Activated naive CD8-positive, alpha-beta T cell treated with anti-CD3 and anti-CD28 coated beads, Interleukin-2, amount 10 ng/mL, durations not matched to agents 7 days and 5 days (primary cell): ENCODE measurements at regions of chr3 and their contacts with region 1.

Region 1: GRCh38 chr3:25664810-25665314 is at the start of gene TOP2B:
- DNase-seq: peak; percentile 92
- ATAC-seq: peak; percentile 89
- H3K4me3 Mint-ChIP-seq: peak within 1 kb of the TSS; percentile 94
- H3K27ac Mint-ChIP-seq: peak within 1 kb of the TSS; percentile 98
- H3K4me1 Mint-ChIP-seq: peaks cover 31% of the 10 kb centered on the region
- H3K27me3 Mint-ChIP-seq: no peaks in the 10 kb centered on the region
- total RNA-seq, gene TOP2B: 139 to 143 TPM

Region 2: GRCh38 chr3:25648107-25648535 is 16.7 kb before region 1 on chr3:
- POLR2A ChIA-PET with region 1: no interaction called
- DNase-seq: peak; percentile 46
- ATAC-seq: peak; percentile 91
- H3K4me3 Mint-ChIP-seq: no peak overlapping the region
- H3K27ac Mint-ChIP-seq: peak overlapping the region; percentile 1
- H3K4me1 Mint-ChIP-seq: peaks cover 23% of the 10 kb centered on the region
- H3K27me3 Mint-ChIP-seq: no peaks in the 10 kb centered on the region

Region 3: DNA sequence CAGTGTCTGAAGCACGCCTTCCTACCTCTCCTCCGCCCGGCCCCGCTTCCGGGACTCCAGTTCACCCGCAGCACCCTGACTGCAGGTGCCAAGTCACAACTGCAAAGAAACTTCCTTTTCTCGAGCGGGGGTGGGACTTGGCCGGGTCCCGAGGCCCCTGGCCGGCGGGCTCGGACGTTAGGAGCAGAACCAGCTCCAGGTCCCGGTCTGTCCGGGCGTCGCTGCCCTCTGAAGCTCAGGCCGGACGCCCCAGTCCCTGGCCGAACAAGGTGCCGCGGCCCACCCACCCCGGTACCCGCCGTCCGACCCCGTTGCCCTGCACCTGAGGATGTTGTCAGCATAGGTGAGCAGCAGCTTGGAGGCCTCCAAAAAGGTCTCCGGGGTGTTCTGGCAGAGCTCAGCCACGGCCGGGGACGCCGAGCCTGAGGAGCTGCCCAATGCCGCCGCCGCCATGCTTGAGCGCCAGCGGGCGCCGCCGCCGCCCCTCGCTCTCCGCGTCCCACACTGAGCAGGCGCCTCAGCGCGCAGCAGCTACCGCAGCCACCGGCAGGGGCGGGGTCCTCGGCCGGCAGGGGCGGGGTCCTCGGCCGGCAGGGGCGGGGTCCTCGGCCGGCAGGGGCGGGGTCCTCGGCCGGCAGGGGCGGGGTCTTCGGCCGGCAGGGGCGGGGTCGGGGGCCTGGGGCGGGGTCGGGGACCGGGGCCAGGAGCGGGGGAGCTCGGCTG is 118.2 kb after region 1 on chr3 and contains the start of gene NGLY1:
- POLR2A ChIA-PET with region 1: interaction called, 11 read pairs
- DNase-seq: peak; percentile 90
- ATAC-seq: peak; percentile 95
- H3K4me3 Mint-ChIP-seq: peak within 1 kb of the TSS; percentile 91
- H3K27ac Mint-ChIP-seq: peak within 1 kb of the TSS; percentile 86
- H3K4me1 Mint-ChIP-seq: peaks cover 38% of the 10 kb centered on the region
- H3K27me3 Mint-ChIP-seq: peaks cover 2% of the 10 kb centered on the region
- total RNA-seq, gene NGLY1: 80.4 to 80.8 TPM